Gastrocnemius medialis (tissue), 4 donors: ENCODE measurements at regions of chr7 and their contacts with region 1.

Region 1: GRCh38 chr7:95596198-95597063 is at the start of gene PDK4:
- DNase-seq: peak; percentile 99
- ATAC-seq: peak; percentile 77 to 80
- H3K4me3 ChIP-seq: peak within 1 kb of the TSS; percentile 78 to 94 (median 87)
- H3K27ac ChIP-seq: peak within 1 kb of the TSS; percentile 91 to 97 (median 96)
- H3K4me1 ChIP-seq: peaks cover 32% of the 10 kb centered on the region in 2 donors
- H3K27me3 ChIP-seq: no peaks in the 10 kb centered on the region
- CTCF ChIP-seq: no peak
- POLR2A ChIP-seq: peak; percentile 95 to 99
- total RNA-seq, gene PDK4: 2,371 to 5,827 (median 4,654) TPM

Region 2: GRCh38 chr7:95608359-95609173 is 12.1 kb after region 1 on chr7:
- in situ Hi-C with region 1: no loop called
- intact Hi-C with region 1: loop called (anchors 1 kb)
- DNase-seq: peak; percentile 96 to 97
- ATAC-seq: peak; percentile 99
- H3K4me3 ChIP-seq: peak overlapping the region; percentile 45 to 56 (median 53)
- H3K27ac ChIP-seq: peak overlapping the region; percentile 89 to 93 (median 91)
- H3K4me1 ChIP-seq: peaks cover 41 to 53% of the 10 kb centered on the region in 2 donors
- H3K27me3 ChIP-seq: no peaks in the 10 kb centered on the region
- CTCF ChIP-seq: no peak
- POLR2A ChIP-seq: peak in 1 of 2 donors; percentile 72

Region 3: GRCh38 chr7:95660023-95660434 is 63.6 kb after region 1 on chr7:
- in situ Hi-C with region 1: no loop called
- intact Hi-C with region 1: loop called (anchors 1 kb)
- DNase-seq: peak; percentile 65 to 77
- ATAC-seq: peak; percentile 99 to 100
- H3K4me3 ChIP-seq: no peak overlapping the region
- H3K27ac ChIP-seq: peak overlapping the region; percentile 73 to 83 (median 74)
- H3K4me1 ChIP-seq: peaks cover 10 to 15% of the 10 kb centered on the region in 2 donors
- H3K27me3 ChIP-seq: no peaks in the 10 kb centered on the region
- CTCF ChIP-seq: no peak
- POLR2A ChIP-seq: peak in 1 of 2 donors; percentile 55

Region 4: DNA sequence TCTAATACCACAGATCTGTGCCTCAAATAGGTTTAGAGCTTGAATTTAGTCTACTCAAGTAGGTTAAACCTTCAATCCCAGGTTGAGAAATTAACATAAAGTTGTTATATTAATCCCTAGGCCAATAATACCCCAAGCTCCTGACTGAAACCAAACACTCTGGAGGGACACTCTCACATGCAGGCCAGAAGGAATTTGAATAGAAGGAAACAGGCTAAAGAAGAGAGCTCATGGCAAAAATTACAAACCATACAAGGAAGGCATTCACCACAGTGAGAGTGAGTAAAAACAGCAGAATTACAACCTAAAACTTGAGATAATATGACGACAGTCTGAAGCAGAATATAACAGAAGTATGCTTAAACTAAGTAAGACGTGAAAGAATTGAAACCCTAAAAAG is 76.0 kb after region 1 on chr7:
- in situ Hi-C with region 1: no loop called
- intact Hi-C with region 1: no loop called
- DNase-seq: no peak
- ATAC-seq: no peak
- H3K4me3 ChIP-seq: no peak overlapping the region
- H3K27ac ChIP-seq: peak overlapping the region in 1 of 4 donors; percentile 56
- H3K4me1 ChIP-seq: peaks cover 6% of the 10 kb centered on the region in 2 donors
- H3K27me3 ChIP-seq: no peaks in the 10 kb centered on the region
- CTCF ChIP-seq: no peak
- POLR2A ChIP-seq: no peak

Region 5: GRCh38 chr7:95684037-95684436 is 87.6 kb after region 1 on chr7:
- in situ Hi-C with region 1: loop called in 3 of 4 experiments (anchors 5 to 10 kb)
- intact Hi-C with region 1: loop called (anchors 1 kb)
- DNase-seq: no peak
- ATAC-seq: peak; percentile 39 to 67
- H3K4me3 ChIP-seq: no peak overlapping the region
- H3K27ac ChIP-seq: peak overlapping the region; percentile 7 to 65 (median 56)
- H3K4me1 ChIP-seq: peaks cover 18 to 37% of the 10 kb centered on the region in 2 donors
- H3K27me3 ChIP-seq: no peaks in the 10 kb centered on the region
- CTCF ChIP-seq: peak; percentile 47 to 67 (median 65)
- POLR2A ChIP-seq: no peak

Region 6: DNA sequence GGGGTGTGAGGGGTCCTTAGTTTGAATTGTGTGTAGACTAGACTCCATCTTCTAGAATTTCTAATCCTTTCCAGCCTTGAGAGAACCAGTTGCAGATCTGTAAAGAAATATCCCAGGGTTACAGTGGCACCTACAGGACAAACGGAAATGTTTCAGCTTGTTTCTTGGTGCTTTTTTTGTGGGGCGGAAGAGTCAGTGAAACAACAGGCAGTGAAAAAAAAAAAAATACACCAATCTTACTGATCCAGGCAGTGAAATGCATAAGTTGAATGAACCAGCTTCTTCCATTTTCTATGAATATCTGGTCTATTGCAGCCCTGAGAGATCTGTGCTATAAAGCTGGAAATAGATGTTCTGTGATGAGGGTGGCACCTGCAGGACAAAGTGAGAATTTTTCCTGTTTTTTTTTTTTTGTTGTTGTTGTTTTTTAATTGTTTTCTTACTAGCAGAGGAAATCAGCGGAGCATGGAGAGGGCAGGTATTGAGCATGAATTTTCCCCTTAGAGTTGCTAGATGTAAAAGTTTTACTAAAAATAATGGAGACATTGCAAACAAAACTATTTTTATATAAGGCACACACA is 94.0 kb after region 1 on chr7:
- in situ Hi-C with region 1: loop called in 2 of 4 experiments (anchors 10 kb)
- intact Hi-C with region 1: no loop called
- DNase-seq: peak in 1 of 2 donors; percentile 12
- ATAC-seq: peak; percentile 33 to 63
- H3K4me3 ChIP-seq: peak overlapping the region in 3 of 4 donors; percentile 3 to 37 (median 26)
- H3K27ac ChIP-seq: no peak overlapping the region
- H3K4me1 ChIP-seq: peaks cover 24 to 25% of the 10 kb centered on the region in 2 donors
- H3K27me3 ChIP-seq: no peaks in the 10 kb centered on the region
- CTCF ChIP-seq: peak; percentile 44 to 71 (median 59)
- POLR2A ChIP-seq: no peak